Transverse colon (tissue), 4 donors: ENCODE measurements at regions of chr13 and their contacts with region 1.

Region 1: GRCh38 chr13:26698392-26699196 is 62.0 kb downstream of the GPR12 start:
- DNase-seq: peak; percentile 85
- H3K4me3 ChIP-seq: no peak overlapping the region
- H3K27ac ChIP-seq: no peak overlapping the region
- H3K4me1 ChIP-seq: peaks cover 0 to 5% (median 2%) of the 10 kb centered on the region in 4 donors
- H3K27me3 ChIP-seq: peaks cover 6% of the 10 kb centered on the region
- CTCF ChIP-seq: peak; percentile 93 to 97 (median 96)
- EP300 ChIP-seq: no peak
- POLR2A ChIP-seq: no peak

Region 2: GRCh38 chr13:26482451-26483197 is 216.0 kb before region 1 on chr13:
- in situ Hi-C with region 1: loop called in 1 of 4 experiments (anchors 10 kb)
- intact Hi-C with region 1: loop called (anchors 10 kb)
- DNase-seq: peak; percentile 73
- H3K4me3 ChIP-seq: peak overlapping the region in 1 of 4 donors; percentile 18
- H3K27ac ChIP-seq: no peak overlapping the region
- H3K4me1 ChIP-seq: peaks cover 0 to 25% (median 4%) of the 10 kb centered on the region in 4 donors
- H3K27me3 ChIP-seq: no peaks in the 10 kb centered on the region
- CTCF ChIP-seq: peak; percentile 81 to 88 (median 86)
- EP300 ChIP-seq: no peak
- POLR2A ChIP-seq: no peak